ENCODE measurements at regions of chr7 and their contacts with region 1.

Region 1: DNA sequence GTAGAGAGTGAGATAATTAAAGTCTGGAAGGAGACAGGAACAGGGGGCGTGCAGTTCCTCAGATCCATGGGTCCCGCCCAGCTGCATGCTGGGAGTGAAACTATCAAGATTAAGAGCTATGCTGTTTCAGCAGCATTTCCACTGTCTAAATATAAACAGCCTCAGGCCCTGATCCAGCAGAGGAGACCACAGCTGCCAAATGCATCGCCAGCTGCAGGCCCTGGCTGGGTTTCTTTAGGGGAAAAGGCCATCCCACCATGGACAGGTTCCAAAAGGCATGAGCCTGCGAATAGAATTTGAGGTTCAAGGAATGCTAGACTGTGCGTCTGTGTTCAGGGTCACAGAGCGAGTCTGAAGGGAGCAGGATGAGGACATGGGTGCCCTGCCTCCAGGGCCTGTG is 411.4 kb downstream of the PAXIP1 start:
- DNase-seq: peak; percentile 26 to 82 (median 76)
- H3K4me3 ChIP-seq: peak overlapping the region in 4 of 59 donors; percentile 7 to 20 (median 13)
- H3K27ac ChIP-seq: peak overlapping the region; percentile 5 to 98 (median 89)
- H3K27me3 ChIP-seq: no peaks in the 10 kb centered on the region
- CTCF ChIP-seq: peak in 4 of 56 donors; percentile 5 to 16 (median 13)

Region 2: GRCh38 chr7:154777023-154777422 is 185.5 kb after region 1 on chr7:
- intact Hi-C with region 1: loop called (anchors 5 to 10 kb)
- DNase-seq: no peak
- H3K4me3 ChIP-seq: peak overlapping the region in 1 of 59 donors; percentile 13
- H3K27ac ChIP-seq: peak overlapping the region; percentile 86 to 100 (median 97)
- H3K27me3 ChIP-seq: peaks cover 0 to 2% (median 0%) of the 10 kb centered on the region in 45 donors
- CTCF ChIP-seq: peak in 28 of 56 donors; percentile 10 to 50 (median 24)

Measured in dorsolateral prefrontal cortex (tissue), 120 donors.